ENCODE measurements at regions of chr4 and their contacts with region 1.

Region 1: GRCh38 chr4:140153718-140154571 is at the start of gene MAML3:
- DNase-seq: peak; percentile 67 to 88 (median 83)
- ATAC-seq: peak; percentile 12
- H3K4me3 ChIP-seq: peak within 1 kb of the TSS; percentile 69 to 75
- H3K4me3 Mint-ChIP-seq: peak within 1 kb of the TSS; percentile 97
- H3K27ac ChIP-seq: peak within 1 kb of the TSS; percentile 12 to 78
- H3K27ac Mint-ChIP-seq: peak within 1 kb of the TSS; percentile 92
- H3K4me1 ChIP-seq: peaks cover 28% of the 10 kb centered on the region
- H3K4me1 Mint-ChIP-seq: peaks cover 40% of the 10 kb centered on the region
- H3K27me3 ChIP-seq: no peaks in the 10 kb centered on the region
- H3K27me3 Mint-ChIP-seq: no peaks in the 10 kb centered on the region
- CTCF ChIP-seq: no peak
- total RNA-seq, gene MAML3: 2.7 TPM

Region 2: GRCh38 chr4:139083956-139084803 is 1069.8 kb before region 1 on chr4:
- CTCF ChIA-PET with region 1: no interaction called
- POLR2A ChIA-PET with region 1: no interaction called
- intact Hi-C with region 1: loop called (anchors 2 to 5 kb)
- DNase-seq: peak; percentile 54 to 92 (median 80)
- ATAC-seq: peak; percentile 41
- H3K4me3 ChIP-seq: peak overlapping the region; percentile 80 to 98
- H3K4me3 Mint-ChIP-seq: peak overlapping the region; percentile 87
- H3K27ac ChIP-seq: peak overlapping the region; percentile 93 to 96
- H3K27ac Mint-ChIP-seq: peak overlapping the region; percentile 94
- H3K4me1 ChIP-seq: peaks cover 25% of the 10 kb centered on the region
- H3K4me1 Mint-ChIP-seq: peaks cover 38% of the 10 kb centered on the region
- H3K27me3 ChIP-seq: no peaks in the 10 kb centered on the region
- H3K27me3 Mint-ChIP-seq: no peaks in the 10 kb centered on the region
- CTCF ChIP-seq: peak; percentile 18

Region 3: GRCh38 chr4:139301113-139301820 is 852.7 kb before region 1 on chr4 and contains the start of gene NAA15:
- CTCF ChIA-PET with region 1: no interaction called
- POLR2A ChIA-PET with region 1: no interaction called
- intact Hi-C with region 1: loop called (anchors 5 to 10 kb)
- DNase-seq: peak; percentile 94 to 99 (median 97)
- ATAC-seq: peak; percentile 89
- H3K4me3 ChIP-seq: peak within 1 kb of the TSS; percentile 90 to 94
- H3K4me3 Mint-ChIP-seq: peak within 1 kb of the TSS; percentile 99
- H3K27ac ChIP-seq: peak within 1 kb of the TSS; percentile 75 to 96
- H3K27ac Mint-ChIP-seq: peak within 1 kb of the TSS; percentile 98
- H3K4me1 ChIP-seq: peaks cover 28% of the 10 kb centered on the region
- H3K4me1 Mint-ChIP-seq: peaks cover 60% of the 10 kb centered on the region
- H3K27me3 ChIP-seq: no peaks in the 10 kb centered on the region
- H3K27me3 Mint-ChIP-seq: no peaks in the 10 kb centered on the region
- CTCF ChIP-seq: no peak
- total RNA-seq, gene NAA15: 55.8 to 59.0 TPM

Region 4: GRCh38 chr4:140012688-140013486 is 141.1 kb before region 1 on chr4:
- CTCF ChIA-PET with region 1: interaction called, 7 read pairs
- POLR2A ChIA-PET with region 1: interaction called, 3 read pairs
- intact Hi-C with region 1: loop called (anchors 1 to 5 kb)
- DNase-seq: peak; percentile 31 to 77 (median 59)
- ATAC-seq: peak; percentile 96
- H3K4me3 ChIP-seq: no peak overlapping the region
- H3K4me3 Mint-ChIP-seq: no peak overlapping the region
- H3K27ac ChIP-seq: no peak overlapping the region
- H3K27ac Mint-ChIP-seq: no peak overlapping the region
- H3K4me1 ChIP-seq: no peaks in the 10 kb centered on the region
- H3K4me1 Mint-ChIP-seq: peaks cover 7% of the 10 kb centered on the region
- H3K27me3 ChIP-seq: no peaks in the 10 kb centered on the region
- H3K27me3 Mint-ChIP-seq: no peaks in the 10 kb centered on the region
- CTCF ChIP-seq: peak; percentile 81

Region 5: GRCh38 chr4:140095694-140096482 is 58.1 kb before region 1 on chr4:
- CTCF ChIA-PET with region 1: interaction called, 9 read pairs
- POLR2A ChIA-PET with region 1: interaction called, 9 read pairs
- intact Hi-C with region 1: loop called (anchors 1 kb)
- DNase-seq: peak in 7 of 9 experiments; percentile 8 to 89 (median 68)
- ATAC-seq: peak; percentile 74
- H3K4me3 ChIP-seq: peak overlapping the region; percentile 7 to 19
- H3K4me3 Mint-ChIP-seq: peak overlapping the region; percentile 76
- H3K27ac ChIP-seq: peak overlapping the region; percentile 51 to 65
- H3K27ac Mint-ChIP-seq: peak overlapping the region; percentile 93
- H3K4me1 ChIP-seq: peaks cover 55% of the 10 kb centered on the region
- H3K4me1 Mint-ChIP-seq: peaks cover 76% of the 10 kb centered on the region
- H3K27me3 ChIP-seq: no peaks in the 10 kb centered on the region
- H3K27me3 Mint-ChIP-seq: no peaks in the 10 kb centered on the region
- CTCF ChIP-seq: no peak

Region 6: DNA sequence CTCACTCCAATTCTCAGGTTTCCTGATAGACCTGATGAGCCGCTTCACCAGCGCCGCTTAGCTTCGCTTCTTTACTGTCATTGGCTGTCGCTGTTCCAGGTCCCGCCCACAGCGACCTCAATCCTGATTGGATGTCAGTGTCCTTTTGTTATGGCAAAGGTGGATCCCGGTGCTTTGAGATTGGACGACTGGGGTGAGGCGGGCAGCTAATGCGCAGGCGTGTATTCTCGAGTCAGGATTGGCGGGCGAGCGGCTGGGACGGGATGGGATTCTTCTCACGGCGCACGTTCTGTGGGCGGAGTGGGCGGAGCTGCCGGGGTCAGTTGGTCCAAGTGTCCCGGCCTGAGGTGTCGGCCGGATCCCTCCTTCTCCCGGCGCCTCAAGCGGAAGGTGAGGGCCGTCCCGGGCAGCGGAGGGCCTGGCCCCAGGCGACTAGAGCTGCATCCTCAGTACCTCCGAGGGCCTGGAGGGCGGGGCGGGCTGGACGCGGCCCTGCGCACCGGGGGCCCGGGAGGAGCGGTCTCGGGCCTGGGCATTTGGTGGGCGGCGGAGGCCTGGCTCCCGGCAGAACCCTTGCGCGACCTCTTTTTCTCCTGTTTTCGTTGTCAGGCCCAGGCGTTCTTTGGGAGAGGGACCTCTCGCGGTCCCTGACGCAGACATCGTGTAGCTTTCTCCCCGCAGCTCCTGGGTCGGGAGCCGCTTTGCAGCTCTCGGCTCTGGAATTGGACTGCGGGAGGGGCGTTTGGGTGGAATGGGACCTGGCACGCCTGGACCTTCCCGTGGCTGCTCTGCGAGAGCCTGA is 219.6 kb after region 1 on chr4 and contains the start of gene SCOC:
- CTCF ChIA-PET with region 1: no interaction called
- POLR2A ChIA-PET with region 1: interaction called, 3 read pairs
- intact Hi-C with region 1: loop called (anchors 5 kb)
- DNase-seq: peak; percentile 90 to 98 (median 95)
- ATAC-seq: peak; percentile 94
- H3K4me3 ChIP-seq: peak within 1 kb of the TSS; percentile 85 to 92
- H3K4me3 Mint-ChIP-seq: no peak within 1 kb of the TSS
- H3K27ac ChIP-seq: peak within 1 kb of the TSS; percentile 81 to 85
- H3K27ac Mint-ChIP-seq: peak within 1 kb of the TSS; percentile 76
- H3K4me1 ChIP-seq: peaks cover 20% of the 10 kb centered on the region
- H3K4me1 Mint-ChIP-seq: peaks cover 37% of the 10 kb centered on the region
- H3K27me3 ChIP-seq: no peaks in the 10 kb centered on the region
- H3K27me3 Mint-ChIP-seq: no peaks in the 10 kb centered on the region
- CTCF ChIP-seq: no peak
- total RNA-seq, gene SCOC: 7.1 to 8.3 TPM